MCF 10A (cell line): ENCODE measurements at regions of chr6 and their contacts with region 1.

Region 1: DNA sequence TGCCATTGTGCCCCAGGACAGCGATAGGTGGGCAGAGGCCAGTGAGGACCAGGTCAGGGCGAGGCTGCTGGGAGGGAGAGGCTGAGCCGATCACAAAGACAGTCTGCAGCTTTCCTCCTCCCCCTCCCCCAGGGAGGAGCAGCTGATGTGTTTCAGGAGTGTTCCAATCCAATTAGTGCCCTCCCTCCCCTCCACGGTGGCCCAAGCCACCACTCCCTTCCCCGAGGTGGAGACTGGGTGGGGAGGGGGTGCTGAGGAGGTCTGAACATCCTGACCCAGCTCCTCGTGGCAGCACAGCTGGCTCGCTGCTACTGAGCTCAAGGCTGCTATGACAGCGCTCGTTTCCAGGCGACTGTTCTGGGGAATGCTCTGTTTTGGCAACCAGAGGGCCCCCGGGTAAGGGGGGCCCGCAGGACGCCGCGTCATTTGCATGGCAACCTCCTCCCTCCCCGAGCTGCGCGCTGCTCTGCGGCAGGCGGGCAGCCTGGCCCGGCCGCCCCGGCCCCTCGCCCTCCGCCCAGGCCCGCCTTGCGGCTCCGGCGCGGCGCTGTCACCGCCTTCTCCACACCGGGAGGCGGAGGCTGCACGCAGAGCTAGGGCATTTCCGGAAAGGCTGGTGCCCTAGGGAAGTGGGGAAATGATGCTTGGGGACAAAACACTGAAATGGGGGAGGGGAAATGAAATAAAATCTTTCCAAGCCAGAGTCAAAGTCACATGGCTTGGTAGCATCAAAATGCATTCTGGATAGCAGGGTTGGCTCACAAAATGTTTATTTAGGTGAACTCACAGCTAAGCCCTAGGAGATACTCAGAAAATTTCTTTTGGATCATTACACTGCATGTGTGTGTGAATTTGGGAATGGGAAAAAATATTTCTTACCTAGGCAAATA is 67.4 kb upstream of the PIM1 start:
- DNase-seq: peak; percentile 72
- H3K4me3 Mint-ChIP-seq: peak overlapping the region; percentile 67
- H3K27ac Mint-ChIP-seq: peak overlapping the region; percentile 93
- H3K4me1 Mint-ChIP-seq: peaks cover 13% of the 10 kb centered on the region
- H3K27me3 Mint-ChIP-seq: no peaks in the 10 kb centered on the region
- CTCF ChIP-seq: no peak

Region 2: GRCh38 chr6:37131104-37131959 is 28.8 kb after region 1 on chr6:
- CTCF ChIA-PET with region 1: interaction called, 5 read pairs
- POLR2A ChIA-PET with region 1: interaction called, 15 read pairs
- intact Hi-C with region 1: no loop called
- DNase-seq: peak; percentile 68
- H3K4me3 Mint-ChIP-seq: no peak overlapping the region
- H3K27ac Mint-ChIP-seq: peak overlapping the region; percentile 33
- H3K4me1 Mint-ChIP-seq: peaks cover 49% of the 10 kb centered on the region
- H3K27me3 Mint-ChIP-seq: no peaks in the 10 kb centered on the region
- CTCF ChIP-seq: no peak